ENCODE measurements at regions of chr7 and their contacts with region 1.

Region 1: GRCh38 chr7:140924019-140924820 is 509 bp downstream of the BRAF start:
- DNase-seq: peak; percentile 65
- ATAC-seq: peak; percentile 89
- H3K4me3 ChIP-seq: peak overlapping the region; percentile 84 to 92 (median 90)
- H3K27ac ChIP-seq: peak overlapping the region; percentile 97
- H3K4me1 ChIP-seq: peaks cover 45% of the 10 kb centered on the region
- H3K27me3 ChIP-seq: no peaks in the 10 kb centered on the region; a peak in 1 of 5 replicates
- CTCF ChIP-seq: peak; percentile 82
- EP300 ChIP-seq: no peak
- POLR2A ChIP-seq: peak in 1 of 2 experiments; percentile 46; a peak in 3 of 4 replicates
- RAD21 ChIP-seq: peak; percentile 38; the same call in 1 of the 2 replicates

Region 2: GRCh38 chr7:140810830-140811556 is 113.2 kb before region 1 on chr7:
- CTCF ChIA-PET with region 1: no interaction called
- POLR2A ChIA-PET with region 1: interaction called, 8 read pairs
- in situ Hi-C with region 1: no loop called
- intact Hi-C with region 1: loop called (anchors 1 kb)
- DNase-seq: peak; percentile 76
- ATAC-seq: peak; percentile 99
- H3K4me3 ChIP-seq: no peak overlapping the region
- H3K27ac ChIP-seq: no peak overlapping the region
- H3K4me1 ChIP-seq: peaks cover 12% of the 10 kb centered on the region
- H3K27me3 ChIP-seq: no peaks in the 10 kb centered on the region
- CTCF ChIP-seq: peak; percentile 91
- EP300 ChIP-seq: no peak
- POLR2A ChIP-seq: no peak
- RAD21 ChIP-seq: peak; percentile 78

Region 3: DNA sequence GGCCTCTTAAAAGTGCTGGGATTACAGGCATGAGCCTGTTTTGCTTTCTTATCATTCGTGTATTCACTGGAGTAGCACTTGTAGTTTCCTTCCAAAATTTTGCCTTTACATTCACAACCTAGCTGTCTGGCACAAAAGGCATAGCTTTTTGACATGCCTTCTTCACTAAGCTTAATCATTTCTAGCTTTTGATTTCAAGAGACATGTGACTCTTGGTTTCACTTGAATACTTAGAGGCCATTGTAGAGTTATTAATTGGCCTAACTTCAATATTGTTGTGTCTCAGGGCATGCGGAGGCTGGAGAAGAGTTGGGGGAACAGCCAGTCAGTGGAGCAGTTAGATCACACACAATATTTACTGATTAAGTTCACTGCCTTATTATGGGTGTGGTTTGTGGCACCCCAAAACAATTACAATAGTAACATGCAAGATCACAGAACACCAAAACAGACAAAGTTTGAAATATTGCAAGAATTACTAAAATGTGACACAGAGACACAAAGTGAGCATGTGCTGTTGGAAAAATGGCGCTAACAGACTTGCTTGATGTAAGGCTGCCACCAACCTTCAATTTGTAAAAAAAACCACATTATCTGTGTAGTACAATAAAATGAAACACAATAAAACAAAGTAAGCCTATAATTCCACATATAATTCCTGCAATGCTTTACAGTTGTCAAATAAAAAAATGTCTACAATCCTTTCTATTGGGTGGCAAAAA is 42.6 kb before region 1 on chr7:
- CTCF ChIA-PET with region 1: no interaction called
- POLR2A ChIA-PET with region 1: interaction called, 4 read pairs
- in situ Hi-C with region 1: no loop called
- intact Hi-C with region 1: loop called (anchors 5 kb)
- DNase-seq: no peak
- ATAC-seq: no peak
- H3K4me3 ChIP-seq: no peak overlapping the region
- H3K27ac ChIP-seq: no peak overlapping the region
- H3K4me1 ChIP-seq: no peaks in the 10 kb centered on the region
- H3K27me3 ChIP-seq: no peaks in the 10 kb centered on the region
- CTCF ChIP-seq: no peak
- EP300 ChIP-seq: no peak
- POLR2A ChIP-seq: no peak
- RAD21 ChIP-seq: no peak

Region 4: GRCh38 chr7:140914083-140914482 is 10.1 kb before region 1 on chr7:
- CTCF ChIA-PET with region 1: no interaction called
- POLR2A ChIA-PET with region 1: interaction called, 22 read pairs
- in situ Hi-C with region 1: no loop called
- intact Hi-C with region 1: no loop called
- DNase-seq: no peak
- ATAC-seq: no peak
- H3K4me3 ChIP-seq: peak overlapping the region; percentile 20 to 60 (median 46); a peak in 5 of 6 replicates
- H3K27ac ChIP-seq: peak overlapping the region; percentile 75
- H3K4me1 ChIP-seq: peaks cover 36% of the 10 kb centered on the region
- H3K27me3 ChIP-seq: no peaks in the 10 kb centered on the region
- CTCF ChIP-seq: no peak
- EP300 ChIP-seq: no peak
- POLR2A ChIP-seq: no peak
- RAD21 ChIP-seq: no peak

Region 5: DNA sequence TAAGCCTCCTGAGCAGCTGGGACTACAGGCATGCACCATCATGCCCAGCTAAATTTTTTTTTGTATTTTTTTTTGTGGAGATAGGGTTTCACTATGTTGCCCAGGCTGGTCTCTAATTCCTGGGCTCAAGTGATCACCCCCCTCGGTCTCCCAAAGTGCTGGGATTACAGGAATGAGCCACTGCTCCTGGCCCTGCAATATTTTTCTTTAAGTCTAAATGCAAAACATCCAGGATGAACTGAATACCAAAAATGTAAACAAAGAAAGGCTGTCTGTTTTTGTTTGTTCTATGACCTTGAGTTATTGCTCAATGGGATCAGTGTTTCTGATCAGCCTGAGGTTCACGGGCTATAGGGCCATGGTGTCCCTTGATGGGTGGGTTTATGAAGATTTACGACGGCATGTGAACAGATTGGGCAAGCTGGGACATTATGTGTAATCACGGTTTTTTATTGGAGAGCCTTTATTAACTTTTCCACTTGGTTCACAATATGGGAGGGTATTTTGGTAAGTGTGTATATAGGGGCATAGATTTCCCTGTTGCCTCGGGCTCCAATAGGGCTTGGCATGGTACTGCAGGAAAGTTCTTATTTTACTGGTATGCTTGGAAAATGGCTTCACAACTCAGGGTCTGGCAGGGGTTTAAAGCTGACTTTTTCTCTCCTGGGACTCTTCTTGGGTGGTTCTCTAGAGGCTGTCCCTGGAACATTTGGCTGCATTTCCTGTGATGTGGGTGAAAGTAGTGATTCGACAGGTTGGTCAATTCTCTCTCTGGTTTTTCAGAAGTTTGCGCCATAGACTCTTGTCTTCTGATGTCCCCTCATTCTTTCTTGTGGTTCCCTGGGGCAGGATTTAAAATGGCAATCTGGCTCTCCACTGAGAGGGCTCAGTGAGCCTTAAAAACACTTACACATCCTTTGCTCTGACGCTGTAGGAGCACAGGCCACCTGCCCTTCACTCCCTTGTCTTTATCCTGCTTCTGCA is 48.9 kb after region 1 on chr7:
- CTCF ChIA-PET with region 1: no interaction called
- POLR2A ChIA-PET with region 1: interaction called, 10 read pairs
- in situ Hi-C with region 1: no loop called
- intact Hi-C with region 1: loop called (anchors 2 kb)
- DNase-seq: peak; percentile 90
- ATAC-seq: peak; percentile 79
- H3K4me3 ChIP-seq: peak overlapping the region; percentile 34 to 43 (median 36); a peak in 5 of 6 replicates
- H3K27ac ChIP-seq: peak overlapping the region; percentile 85
- H3K4me1 ChIP-seq: peaks cover 76% of the 10 kb centered on the region
- H3K27me3 ChIP-seq: no peaks in the 10 kb centered on the region
- CTCF ChIP-seq: no peak
- EP300 ChIP-seq: peak in 1 of 2 experiments; percentile 87; a peak in 2 of 4 replicates
- POLR2A ChIP-seq: no peak
- RAD21 ChIP-seq: no peak

Region 6: GRCh38 chr7:141072548-141073172 is 148.4 kb after region 1 on chr7:
- CTCF ChIA-PET with region 1: no interaction called
- POLR2A ChIA-PET with region 1: no interaction called
- in situ Hi-C with region 1: no loop called
- intact Hi-C with region 1: no loop called
- DNase-seq: no peak
- ATAC-seq: peak; percentile 63
- H3K4me3 ChIP-seq: peak overlapping the region in 2 of 3 experiments; percentile 9 to 57; a peak in 3 of 6 replicates
- H3K27ac ChIP-seq: no peak overlapping the region
- H3K4me1 ChIP-seq: peaks cover 15% of the 10 kb centered on the region; the same call in 1 of the 2 replicates
- H3K27me3 ChIP-seq: peaks cover 9 to 64% of the 10 kb centered on the region in 2 experiments; a peak in 4 of 5 replicates
- CTCF ChIP-seq: no peak
- EP300 ChIP-seq: no peak
- POLR2A ChIP-seq: no peak
- RAD21 ChIP-seq: no peak

Measured in HepG2 (cell line).